Activated CD8-positive, alpha-beta T cell treated with anti-CD3 and anti-CD28 coated beads for 36 hours (primary cell): ENCODE measurements at regions of chr3 and their contacts with region 1.

Region 1: GRCh38 chr3:53130179-53131061 is at the start of gene RFT1:
- DNase-seq: peak; percentile 100
- ATAC-seq: peak; percentile 94
- H3K4me3 Mint-ChIP-seq: peak within 1 kb of the TSS; percentile 94
- H3K27ac Mint-ChIP-seq: peak within 1 kb of the TSS; percentile 98
- H3K4me1 Mint-ChIP-seq: peaks cover 21% of the 10 kb centered on the region
- H3K27me3 Mint-ChIP-seq: no peaks in the 10 kb centered on the region
- CTCF ChIP-seq: no peak
- total RNA-seq, gene RFT1: 42.5 to 42.9 TPM

Region 2: DNA sequence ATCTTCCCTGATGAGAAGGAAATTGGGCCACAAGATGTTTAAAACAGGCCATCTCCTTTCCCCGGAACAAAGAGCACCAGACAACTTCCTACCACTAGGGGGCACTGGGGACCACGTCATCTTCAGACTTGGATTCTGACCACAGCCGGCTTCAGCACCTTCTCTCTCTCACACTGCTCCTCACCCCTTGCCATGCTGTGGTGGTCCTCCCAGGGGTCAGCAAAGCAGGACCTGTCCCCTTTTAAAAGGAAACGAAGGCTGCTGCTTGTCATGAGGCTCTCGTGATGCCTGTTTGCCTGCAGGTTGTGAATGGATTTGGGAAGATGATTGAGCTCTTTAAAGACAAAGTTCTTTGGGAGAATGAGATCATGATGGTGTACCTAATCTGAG is 16.4 kb before region 1 on chr3:
- CTCF ChIA-PET with region 1: interaction called, 14 read pairs
- POLR2A ChIA-PET with region 1: interaction called, 13 read pairs
- intact Hi-C with region 1: no loop called
- DNase-seq: peak; percentile 94
- ATAC-seq: peak; percentile 57
- H3K4me3 Mint-ChIP-seq: no peak overlapping the region
- H3K27ac Mint-ChIP-seq: no peak overlapping the region
- H3K4me1 Mint-ChIP-seq: peaks cover 16% of the 10 kb centered on the region
- H3K27me3 Mint-ChIP-seq: no peaks in the 10 kb centered on the region
- CTCF ChIP-seq: peak; percentile 89

Region 3: GRCh38 chr3:53140847-53141845 is 10.7 kb after region 1 on chr3:
- CTCF ChIA-PET with region 1: interaction called, 21 read pairs
- POLR2A ChIA-PET with region 1: interaction called, 4 read pairs
- intact Hi-C with region 1: no loop called
- DNase-seq: no peak
- ATAC-seq: peak; percentile 81
- H3K4me3 Mint-ChIP-seq: no peak overlapping the region
- H3K27ac Mint-ChIP-seq: no peak overlapping the region
- H3K4me1 Mint-ChIP-seq: no peaks in the 10 kb centered on the region
- H3K27me3 Mint-ChIP-seq: no peaks in the 10 kb centered on the region
- CTCF ChIP-seq: no peak

Region 4: DNA sequence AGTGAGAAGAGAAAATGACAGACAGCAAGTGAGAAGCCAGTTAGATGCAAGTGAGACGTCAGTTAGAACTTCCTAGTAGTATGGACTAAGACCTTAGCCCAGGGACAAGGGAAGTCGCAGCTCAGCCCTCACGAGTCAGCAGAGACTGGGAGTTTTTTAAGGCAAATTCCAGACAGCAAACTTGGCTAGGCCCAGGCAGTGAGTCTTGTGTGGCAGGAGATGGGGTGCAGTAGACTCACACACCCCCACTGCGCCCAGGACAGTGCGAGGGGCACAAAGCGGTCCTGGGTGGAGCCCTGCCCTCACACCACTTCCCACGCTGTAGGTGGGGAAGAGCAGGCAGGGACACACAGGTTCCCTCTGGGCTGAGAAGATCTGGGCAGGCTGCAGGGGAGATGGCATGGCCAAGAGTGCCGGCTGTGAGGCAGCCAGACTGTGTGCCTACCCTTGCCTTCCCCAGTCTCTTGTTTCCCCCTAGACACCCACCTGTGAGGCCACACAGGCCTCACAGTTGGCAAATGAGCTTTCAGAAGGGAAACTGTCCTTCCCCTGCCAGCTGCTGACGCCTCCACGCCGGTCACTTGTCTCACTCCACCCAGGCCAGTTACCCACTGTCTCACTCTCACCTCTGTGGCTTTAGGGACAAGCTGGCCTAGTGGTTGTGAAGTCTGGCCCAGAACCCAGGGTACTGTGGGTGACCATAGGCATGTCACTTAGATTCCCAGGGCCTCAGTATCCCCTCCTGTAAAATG is 16.9 kb after region 1 on chr3:
- CTCF ChIA-PET with region 1: interaction called, 21 read pairs
- POLR2A ChIA-PET with region 1: no interaction called
- intact Hi-C with region 1: no loop called
- DNase-seq: no peak
- ATAC-seq: no peak
- H3K4me3 Mint-ChIP-seq: no peak overlapping the region
- H3K27ac Mint-ChIP-seq: no peak overlapping the region
- H3K4me1 Mint-ChIP-seq: no peaks in the 10 kb centered on the region
- H3K27me3 Mint-ChIP-seq: no peaks in the 10 kb centered on the region
- CTCF ChIP-seq: no peak

Region 5: DNA sequence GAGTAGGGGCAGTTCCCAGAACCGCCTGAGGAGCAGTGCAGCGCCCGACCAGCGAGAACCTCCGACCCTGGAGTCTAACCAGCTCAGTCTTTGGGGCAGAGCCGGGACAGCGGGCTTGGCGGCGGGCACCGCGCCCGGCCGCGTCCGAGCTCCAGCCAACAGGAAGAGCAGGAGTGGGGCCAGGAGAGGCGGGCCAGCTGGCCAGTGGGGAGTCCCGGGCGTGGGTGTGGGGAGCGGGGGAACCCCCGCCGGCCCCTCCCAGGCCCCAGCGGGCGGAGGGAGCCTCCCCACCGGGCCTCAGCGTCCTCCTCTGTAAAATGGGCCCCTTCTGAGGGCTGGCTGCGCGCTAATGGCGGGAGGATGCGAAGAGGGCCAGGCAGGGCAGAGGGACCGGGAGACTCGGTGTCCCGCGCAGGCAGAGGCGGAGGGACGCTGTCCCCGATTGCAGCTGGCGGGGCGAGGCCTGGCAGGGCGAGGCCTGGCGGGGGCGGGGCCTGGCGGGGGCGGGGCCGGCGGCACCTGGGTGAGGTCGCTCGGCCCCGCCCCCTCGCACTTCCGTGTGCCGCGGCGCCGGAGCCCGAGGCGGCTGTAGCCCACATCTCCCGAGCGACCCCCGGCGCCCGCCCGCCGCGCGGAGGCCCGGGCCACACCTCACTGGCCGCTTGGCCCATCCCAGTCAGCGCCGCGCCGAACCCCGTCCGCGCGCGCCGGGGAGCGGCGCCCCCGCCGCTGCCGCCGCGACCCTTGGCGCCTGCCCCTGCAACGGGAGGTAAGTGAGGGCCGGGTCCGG is 30.4 kb after region 1 on chr3 and contains the start of gene PRKCD:
- CTCF ChIA-PET with region 1: interaction called, 9 read pairs
- POLR2A ChIA-PET with region 1: interaction called, 13 read pairs
- intact Hi-C with region 1: no loop called
- DNase-seq: peak; percentile 82
- ATAC-seq: peak; percentile 75
- H3K4me3 Mint-ChIP-seq: peak within 1 kb of the TSS; percentile 79
- H3K27ac Mint-ChIP-seq: peak within 1 kb of the TSS; percentile 78
- H3K4me1 Mint-ChIP-seq: peaks cover 21% of the 10 kb centered on the region
- H3K27me3 Mint-ChIP-seq: peaks cover 12% of the 10 kb centered on the region
- CTCF ChIP-seq: peak; percentile 63
- total RNA-seq, gene PRKCD: 18.7 to 21.5 TPM

Region 6: GRCh38 chr3:53195602-53196574 is 65.5 kb after region 1 on chr3:
- CTCF ChIA-PET with region 1: interaction called, 178 read pairs
- POLR2A ChIA-PET with region 1: interaction called, 5 read pairs
- intact Hi-C with region 1: loop called (anchors 5 kb)
- DNase-seq: peak; percentile 67
- ATAC-seq: peak; percentile 74
- H3K4me3 Mint-ChIP-seq: no peak overlapping the region
- H3K27ac Mint-ChIP-seq: no peak overlapping the region
- H3K4me1 Mint-ChIP-seq: peaks cover 8% of the 10 kb centered on the region
- H3K27me3 Mint-ChIP-seq: peaks cover 1% of the 10 kb centered on the region
- CTCF ChIP-seq: peak; percentile 99

Region 7: DNA sequence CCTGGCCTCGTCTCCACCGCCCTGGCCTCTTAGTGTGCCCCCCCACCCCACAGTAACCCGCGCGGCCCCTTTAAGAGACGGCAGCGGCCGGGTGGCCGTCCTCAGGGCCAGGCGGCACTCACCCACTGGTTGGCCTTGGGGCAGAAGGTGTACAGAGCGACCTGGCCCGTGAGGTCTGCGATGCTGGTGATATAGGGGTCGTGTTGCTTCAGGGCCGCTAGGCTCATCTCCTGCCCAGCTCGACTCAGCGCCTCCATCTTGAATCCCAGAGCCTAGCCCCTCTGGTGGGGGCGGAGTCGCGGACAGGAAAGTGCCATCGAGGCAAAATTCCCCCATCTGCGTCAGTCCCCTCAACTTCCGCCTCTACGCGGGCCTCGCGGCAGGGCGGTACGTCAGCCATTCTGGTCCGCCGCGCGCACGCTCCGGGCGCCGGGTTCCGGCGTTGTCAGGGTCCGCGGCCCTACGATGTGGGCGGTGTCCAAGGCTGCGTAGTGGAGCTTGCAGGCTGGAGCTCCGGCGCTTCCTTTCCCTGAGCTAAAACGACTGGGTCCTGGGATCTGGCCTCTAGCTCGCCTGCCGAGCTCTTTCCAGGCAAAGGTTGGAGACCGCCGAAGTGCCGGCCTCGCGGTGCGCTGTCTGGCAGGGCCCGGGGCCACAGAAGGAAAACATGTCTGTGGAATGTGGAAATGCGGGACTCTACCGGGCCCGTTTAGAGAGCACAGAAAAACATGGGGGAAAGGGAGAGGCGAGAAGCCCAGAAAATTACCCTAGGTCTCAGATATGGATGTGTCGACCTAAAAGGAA is 217.0 kb after region 1 on chr3 and contains the start of gene DCP1A:
- CTCF ChIA-PET with region 1: interaction called, 4 read pairs
- POLR2A ChIA-PET with region 1: no interaction called
- intact Hi-C with region 1: loop called (anchors 10 kb)
- DNase-seq: peak; percentile 97
- ATAC-seq: peak; percentile 97
- H3K4me3 Mint-ChIP-seq: peak within 1 kb of the TSS; percentile 98
- H3K27ac Mint-ChIP-seq: peak within 1 kb of the TSS; percentile 97
- H3K4me1 Mint-ChIP-seq: peaks cover 30% of the 10 kb centered on the region
- H3K27me3 Mint-ChIP-seq: no peaks in the 10 kb centered on the region
- CTCF ChIP-seq: no peak
- total RNA-seq, gene DCP1A: 29.9 to 32.0 TPM